WTC11 (cell line): ENCODE measurements at regions of chr11 and their contacts with region 1.

Region 1: DNA sequence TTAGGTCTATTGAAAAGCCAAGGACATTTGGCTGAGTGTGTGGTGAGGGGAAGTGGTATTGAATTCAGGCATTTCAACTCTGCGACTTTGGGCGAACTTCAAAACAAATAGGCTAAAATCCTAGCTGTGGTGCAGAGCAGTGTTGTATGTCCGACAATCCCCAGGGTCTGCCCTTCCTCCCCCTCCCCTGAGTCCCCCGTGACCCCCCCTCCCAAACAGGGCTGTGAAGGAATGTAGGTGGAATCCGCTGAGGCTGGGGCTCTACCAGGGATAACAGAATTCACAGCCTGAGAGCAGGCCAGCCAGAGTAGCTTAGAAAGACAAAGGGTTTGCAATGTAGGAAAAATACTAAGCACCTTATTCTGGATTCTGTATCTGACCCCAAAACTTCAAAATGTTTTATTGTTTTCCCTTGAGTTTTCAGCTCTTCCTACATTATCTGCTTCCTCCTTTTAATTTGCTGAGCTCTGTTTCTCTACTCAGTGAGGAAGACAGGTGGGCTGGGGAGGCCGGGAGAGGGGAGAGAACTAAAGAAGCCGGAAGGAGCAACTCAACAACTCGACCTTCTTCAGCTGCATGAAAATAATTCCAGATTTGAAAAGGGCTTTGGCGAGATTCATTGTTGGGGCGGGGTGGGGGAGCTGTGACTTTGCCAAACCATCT is 315.2 kb downstream of the BLID start:
- DNase-seq: peak; percentile 79
- ATAC-seq: peak; percentile 91
- H3K4me3 Mint-ChIP-seq: peak overlapping the region; percentile 58
- H3K27ac Mint-ChIP-seq: peak overlapping the region; percentile 99
- H3K4me1 Mint-ChIP-seq: peaks cover 68% of the 10 kb centered on the region
- H3K27me3 Mint-ChIP-seq: no peaks in the 10 kb centered on the region
- CTCF ChIP-seq: no peak

Region 2: GRCh38 chr11:121829159-121829643 is 28.3 kb after region 1 on chr11:
- CTCF ChIA-PET with region 1: interaction called, 5 read pairs
- POLR2A ChIA-PET with region 1: interaction called, 10 read pairs
- DNase-seq: no peak
- ATAC-seq: no peak
- H3K4me3 Mint-ChIP-seq: no peak overlapping the region
- H3K27ac Mint-ChIP-seq: no peak overlapping the region
- H3K4me1 Mint-ChIP-seq: no peaks in the 10 kb centered on the region
- H3K27me3 Mint-ChIP-seq: no peaks in the 10 kb centered on the region
- CTCF ChIP-seq: no peak

Region 3: GRCh38 chr11:121996574-121996973 is 195.7 kb after region 1 on chr11:
- CTCF ChIA-PET with region 1: no interaction called
- POLR2A ChIA-PET with region 1: no interaction called
- DNase-seq: no peak
- ATAC-seq: no peak
- H3K4me3 Mint-ChIP-seq: no peak overlapping the region
- H3K27ac Mint-ChIP-seq: no peak overlapping the region
- H3K4me1 Mint-ChIP-seq: no peaks in the 10 kb centered on the region
- H3K27me3 Mint-ChIP-seq: no peaks in the 10 kb centered on the region
- CTCF ChIP-seq: no peak